Sciatic nerve (tissue), 2 donors: ENCODE measurements at regions of chr11 and their contacts with region 1.

Region 1: GRCh38 chr11:2151500-2152257 is 9.3 kb downstream of the INS start:
- DNase-seq: peak; percentile 90
- ATAC-seq: peak; percentile 70

Region 2: DNA sequence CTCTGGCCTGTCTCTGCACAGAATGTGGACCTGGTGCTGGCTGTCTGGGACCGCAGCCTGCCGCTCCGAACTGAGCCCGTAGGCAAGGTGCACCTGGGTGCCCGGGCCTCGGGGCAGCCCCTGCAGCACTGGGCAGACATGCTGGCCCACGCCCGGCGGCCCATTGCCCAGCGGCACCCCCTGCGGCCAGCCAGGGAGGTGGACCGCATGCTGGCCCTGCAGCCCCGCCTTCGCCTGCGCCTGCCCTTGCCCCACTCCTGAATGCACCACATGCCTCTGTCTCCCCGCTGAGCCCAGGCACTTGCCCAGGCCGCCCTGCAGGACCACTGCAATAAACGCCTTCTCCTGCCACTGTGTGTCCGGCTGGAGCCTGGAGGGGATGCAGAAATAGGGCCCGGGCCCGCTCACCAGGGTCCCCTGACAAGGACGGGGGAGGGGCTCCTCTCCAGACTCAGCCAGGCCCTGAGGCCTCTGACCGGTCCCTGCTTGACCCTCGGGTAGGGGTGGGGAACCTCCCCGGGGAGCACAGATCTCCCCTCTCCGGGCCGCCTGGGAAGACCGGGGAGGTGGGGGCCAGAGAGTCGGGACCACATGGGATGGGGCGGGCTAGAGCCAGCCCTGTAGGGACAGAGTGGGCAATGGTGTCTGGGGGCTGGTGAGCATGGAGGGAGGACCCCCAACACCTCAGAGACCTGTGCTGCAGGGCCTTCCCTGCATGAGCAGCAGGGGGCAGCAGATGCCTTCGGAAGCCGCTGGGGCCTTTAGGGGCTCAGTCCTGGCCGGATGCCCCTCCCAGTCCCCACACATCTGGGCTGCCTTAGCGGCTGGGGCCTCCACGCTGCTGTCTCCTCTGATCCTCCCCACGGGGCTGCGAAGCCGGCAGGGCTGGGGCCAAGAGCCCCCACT is 314.3 kb before region 1 on chr11:
- intact Hi-C with region 1: loop called (anchors 5 kb)
- DNase-seq: peak; percentile 88
- ATAC-seq: peak; percentile 81